HCT116 (cell line): ENCODE measurements at regions of chr10 and their contacts with region 1.

Region 1: GRCh38 chr10:58334817-58335305 is at the start of gene UBE2D1:
- DNase-seq: peak; percentile 55
- ATAC-seq: peak; percentile 95
- H3K4me3 ChIP-seq: peak within 1 kb of the TSS; percentile 77 to 90
- H3K27ac ChIP-seq: peak within 1 kb of the TSS; percentile 64
- H3K4me1 ChIP-seq: peaks cover 0 to 18% of the 10 kb centered on the region in 2 experiments; a peak in 2 of 4 replicates
- H3K27me3 ChIP-seq: no peaks in the 10 kb centered on the region
- CTCF ChIP-seq: peak in 1 of 3 experiments; percentile 2; a peak in 1 of 6 replicates
- POLR2A ChIP-seq: peak; percentile 91
- RAD21 ChIP-seq: no peak
- total RNA-seq, gene UBE2D1: 15.5 TPM

Region 2: DNA sequence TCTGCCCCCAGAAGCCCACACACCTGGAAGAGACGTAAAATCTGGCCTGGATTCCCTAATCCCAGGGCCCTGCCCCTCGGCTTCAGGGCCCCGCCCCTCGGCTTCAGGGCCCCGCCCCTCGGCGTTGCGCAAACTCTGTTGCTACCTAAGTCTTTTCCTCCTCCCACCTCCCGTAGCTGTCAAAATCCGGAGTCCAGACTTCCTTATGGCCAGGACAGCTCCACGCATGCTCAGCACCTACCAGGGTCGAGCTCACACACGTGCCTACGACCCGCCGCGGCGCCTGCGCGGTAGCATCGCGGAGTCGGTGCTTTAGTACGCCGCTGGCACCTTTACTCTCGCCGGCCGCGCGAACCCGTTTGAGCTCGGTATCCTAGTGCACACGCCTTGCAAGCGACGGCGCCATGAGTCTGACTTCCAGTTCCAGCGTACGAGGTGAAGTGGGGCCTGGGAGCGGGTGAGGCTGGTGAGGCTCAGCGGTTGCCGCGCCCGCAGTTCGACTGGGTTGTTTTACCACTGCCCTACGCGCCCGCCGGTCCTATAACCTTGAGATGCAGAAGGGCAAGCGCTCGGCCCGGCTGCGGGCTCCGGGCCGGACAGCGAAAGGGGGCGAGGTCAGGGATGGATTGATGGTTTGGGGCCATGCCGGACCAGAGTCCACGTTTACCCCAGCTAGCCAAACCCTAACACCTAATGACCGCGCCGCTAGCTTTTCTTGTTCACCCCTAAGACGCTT is 65.8 kb before region 1 on chr10 and contains the start of gene CISD1:
- CTCF ChIA-PET with region 1: no interaction called
- POLR2A ChIA-PET with region 1: interaction called, 3 read pairs
- RAD21 ChIA-PET with region 1: no interaction called
- intact Hi-C with region 1: loop called (anchors 2 kb)
- DNase-seq: peak; percentile 99
- ATAC-seq: peak; percentile 82
- H3K4me3 ChIP-seq: peak within 1 kb of the TSS; percentile 74 to 81
- H3K27ac ChIP-seq: peak within 1 kb of the TSS; percentile 94
- H3K4me1 ChIP-seq: peaks cover 16 to 28% of the 10 kb centered on the region in 2 experiments
- H3K27me3 ChIP-seq: no peaks in the 10 kb centered on the region
- CTCF ChIP-seq: no peak
- POLR2A ChIP-seq: peak; percentile 67
- RAD21 ChIP-seq: no peak
- total RNA-seq, gene CISD1: 47.3 TPM

Region 3: GRCh38 chr10:58350619-58351323 is 15.9 kb after region 1 on chr10:
- CTCF ChIA-PET with region 1: no interaction called
- POLR2A ChIA-PET with region 1: interaction called, 12 read pairs
- RAD21 ChIA-PET with region 1: no interaction called
- intact Hi-C with region 1: no loop called
- DNase-seq: no peak
- ATAC-seq: no peak
- H3K4me3 ChIP-seq: no peak overlapping the region
- H3K27ac ChIP-seq: no peak overlapping the region
- H3K4me1 ChIP-seq: no peaks in the 10 kb centered on the region
- H3K27me3 ChIP-seq: no peaks in the 10 kb centered on the region
- CTCF ChIP-seq: no peak
- POLR2A ChIP-seq: no peak
- RAD21 ChIP-seq: no peak

Region 4: DNA sequence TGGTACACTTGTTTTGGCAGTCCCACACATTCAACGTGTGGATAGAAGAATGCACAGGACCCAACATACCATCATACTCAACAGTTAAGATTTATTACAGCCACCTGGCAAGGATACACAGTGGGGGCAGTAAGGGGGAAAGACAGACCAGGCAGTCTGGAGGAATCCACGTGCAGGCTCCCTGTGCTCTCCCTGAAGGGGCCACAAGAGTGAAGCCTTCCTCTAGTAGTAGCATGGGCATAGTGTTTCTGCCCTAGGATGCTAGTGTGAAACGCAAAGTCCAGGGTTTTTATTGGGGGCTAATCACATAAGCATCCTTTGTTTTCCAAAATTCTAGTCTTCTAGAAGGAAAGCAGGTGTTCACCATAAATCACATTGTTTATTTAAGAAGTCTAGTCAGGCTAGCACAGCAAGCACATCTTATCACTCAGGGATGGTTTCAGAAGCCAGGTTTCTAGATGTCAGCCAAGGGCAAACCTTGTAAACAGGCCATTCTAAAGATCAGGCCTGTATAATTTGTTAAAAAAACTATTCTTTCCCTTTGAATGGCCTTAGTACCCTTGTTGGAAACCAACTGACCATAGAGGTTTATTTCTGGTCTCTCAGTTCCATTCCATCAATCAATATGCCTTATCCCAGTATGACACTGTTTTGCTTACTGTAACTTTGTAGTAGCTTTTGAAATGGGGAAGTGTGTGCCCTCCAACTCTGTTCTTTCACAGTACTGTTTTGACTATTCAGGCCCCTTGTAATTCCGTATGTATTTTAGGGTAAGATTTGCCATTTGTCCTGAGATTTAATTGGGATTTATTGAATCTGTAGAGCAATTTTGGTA is 38.0 kb after region 1 on chr10:
- CTCF ChIA-PET with region 1: no interaction called
- POLR2A ChIA-PET with region 1: no interaction called
- RAD21 ChIA-PET with region 1: no interaction called
- intact Hi-C with region 1: no loop called
- DNase-seq: no peak
- ATAC-seq: no peak
- H3K4me3 ChIP-seq: no peak overlapping the region
- H3K27ac ChIP-seq: no peak overlapping the region
- H3K4me1 ChIP-seq: peaks cover 0 to 6% of the 10 kb centered on the region in 2 experiments; a peak in 1 of 4 replicates
- H3K27me3 ChIP-seq: no peaks in the 10 kb centered on the region
- CTCF ChIP-seq: no peak
- POLR2A ChIP-seq: no peak
- RAD21 ChIP-seq: no peak

Region 5: GRCh38 chr10:58384999-58385783 is 50.3 kb after region 1 on chr10 and contains the start of gene TFAM:
- CTCF ChIA-PET with region 1: no interaction called
- POLR2A ChIA-PET with region 1: interaction called, 5 read pairs
- RAD21 ChIA-PET with region 1: no interaction called
- intact Hi-C with region 1: loop called (anchors 5 kb)
- DNase-seq: peak; percentile 81
- ATAC-seq: peak; percentile 91
- H3K4me3 ChIP-seq: peak within 1 kb of the TSS; percentile 93 to 94
- H3K27ac ChIP-seq: peak within 1 kb of the TSS; percentile 93
- H3K4me1 ChIP-seq: peaks cover 12 to 14% of the 10 kb centered on the region in 2 experiments
- H3K27me3 ChIP-seq: no peaks in the 10 kb centered on the region
- CTCF ChIP-seq: peak; percentile 45 to 58 (median 58); a peak in 5 of 6 replicates
- POLR2A ChIP-seq: peak; percentile 95
- RAD21 ChIP-seq: peak; percentile 66
- total RNA-seq, gene TFAM: 57.6 TPM

Region 6: GRCh38 chr10:58465629-58466028 is 130.8 kb after region 1 on chr10:
- CTCF ChIA-PET with region 1: no interaction called
- POLR2A ChIA-PET with region 1: no interaction called
- RAD21 ChIA-PET with region 1: no interaction called
- intact Hi-C with region 1: no loop called
- DNase-seq: no peak
- ATAC-seq: no peak
- H3K4me3 ChIP-seq: no peak overlapping the region
- H3K27ac ChIP-seq: no peak overlapping the region
- H3K4me1 ChIP-seq: no peaks in the 10 kb centered on the region
- H3K27me3 ChIP-seq: peaks cover 12% of the 10 kb centered on the region
- CTCF ChIP-seq: no peak
- POLR2A ChIP-seq: no peak
- RAD21 ChIP-seq: no peak